Activated CD4-positive, alpha-beta T cell treated with anti-CD3 and anti-CD28 coated beads, Interleukin-2, amount 10 ng/mL, durations not matched to agents 24 days and 14 days (primary cell): ENCODE measurements at regions of chr6 and their contacts with region 1.

Region 1: GRCh38 chr6:42260972-42261371 is 43.3 kb upstream of the MRPS10 start:
- DNase-seq: peak; percentile 79
- H3K4me3 Mint-ChIP-seq: no peak overlapping the region
- H3K27ac Mint-ChIP-seq: peak overlapping the region; percentile 73
- H3K4me1 Mint-ChIP-seq: peaks cover 8% of the 10 kb centered on the region
- H3K27me3 Mint-ChIP-seq: no peaks in the 10 kb centered on the region

Region 2: GRCh38 chr6:42532038-42532669 is 271.2 kb after region 1 on chr6:
- intact Hi-C with region 1: loop called (anchors 5 kb)
- DNase-seq: peak; percentile 72
- H3K4me3 Mint-ChIP-seq: no peak overlapping the region
- H3K27ac Mint-ChIP-seq: no peak overlapping the region
- H3K4me1 Mint-ChIP-seq: no peaks in the 10 kb centered on the region
- H3K27me3 Mint-ChIP-seq: peaks cover 1% of the 10 kb centered on the region

Region 3: GRCh38 chr6:42547407-42548329 is 286.7 kb after region 1 on chr6:
- intact Hi-C with region 1: loop called (anchors 2 kb)
- DNase-seq: peak; percentile 96
- H3K4me3 Mint-ChIP-seq: peak overlapping the region; percentile 74
- H3K27ac Mint-ChIP-seq: peak overlapping the region; percentile 70
- H3K4me1 Mint-ChIP-seq: peaks cover 14% of the 10 kb centered on the region
- H3K27me3 Mint-ChIP-seq: peaks cover 11% of the 10 kb centered on the region